PC-9 (cell line): ENCODE measurements at regions of chr9 and their contacts with region 1.

Region 1: GRCh38 chr9:78866207-78867132 is 569.5 kb downstream of the PSAT1 start:
- DNase-seq: peak; percentile 44 to 63
- H3K4me3 ChIP-seq: no peak overlapping the region
- H3K27ac ChIP-seq: no peak overlapping the region
- H3K4me1 ChIP-seq: no peaks in the 10 kb centered on the region
- H3K27me3 ChIP-seq: no peaks in the 10 kb centered on the region
- CTCF ChIP-seq: no peak

Region 2: GRCh38 chr9:78707481-78707991 is 158.9 kb before region 1 on chr9:
- CTCF ChIA-PET with region 1: no interaction called
- POLR2A ChIA-PET with region 1: no interaction called
- intact Hi-C with region 1: loop called (anchors 10 kb)
- DNase-seq: no peak
- H3K4me3 ChIP-seq: no peak overlapping the region
- H3K27ac ChIP-seq: no peak overlapping the region
- H3K4me1 ChIP-seq: 0 out of 2 replicates have a peak, but pooled peaks cover 5% of the 10 kb centered on the region
- H3K27me3 ChIP-seq: peaks cover 7% of the 10 kb centered on the region; the same call in 1 of the 2 replicates
- CTCF ChIP-seq: no peak

Region 3: GRCh38 chr9:78783743-78784142 is 82.7 kb before region 1 on chr9:
- CTCF ChIA-PET with region 1: no interaction called
- POLR2A ChIA-PET with region 1: no interaction called
- intact Hi-C with region 1: no loop called
- DNase-seq: no peak
- H3K4me3 ChIP-seq: no peak overlapping the region
- H3K27ac ChIP-seq: no peak overlapping the region
- H3K4me1 ChIP-seq: no peaks in the 10 kb centered on the region
- H3K27me3 ChIP-seq: no peaks in the 10 kb centered on the region
- CTCF ChIP-seq: no peak

Region 4: DNA sequence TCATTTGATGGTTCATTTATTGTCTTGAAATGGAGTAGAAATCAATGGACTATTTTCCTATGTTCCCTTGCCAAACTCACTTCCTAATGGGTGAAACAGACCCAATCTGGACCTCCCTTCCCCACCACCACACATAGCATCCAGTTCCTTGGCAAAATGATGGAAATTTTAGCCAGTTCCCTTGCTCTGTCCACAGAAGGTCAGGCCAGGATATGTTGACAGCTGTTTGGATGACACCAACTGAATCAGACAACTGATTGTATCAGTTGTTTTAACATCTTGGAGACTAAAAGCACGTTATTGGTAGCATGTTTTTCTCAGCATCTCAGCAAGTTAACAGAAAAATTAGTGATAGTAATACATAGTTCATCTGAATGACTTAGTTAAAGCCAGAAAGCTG is 34.7 kb before region 1 on chr9:
- CTCF ChIA-PET with region 1: no interaction called
- POLR2A ChIA-PET with region 1: no interaction called
- intact Hi-C with region 1: no loop called
- DNase-seq: no peak
- H3K4me3 ChIP-seq: no peak overlapping the region
- H3K27ac ChIP-seq: no peak overlapping the region
- H3K4me1 ChIP-seq: no peaks in the 10 kb centered on the region
- H3K27me3 ChIP-seq: no peaks in the 10 kb centered on the region
- CTCF ChIP-seq: no peak

Region 5: GRCh38 chr9:78932830-78933627 is 66.6 kb after region 1 on chr9:
- CTCF ChIA-PET with region 1: no interaction called
- POLR2A ChIA-PET with region 1: no interaction called
- intact Hi-C with region 1: loop called (anchors 5 kb)
- DNase-seq: peak in 1 of 2 experiments; percentile 7
- H3K4me3 ChIP-seq: no peak overlapping the region
- H3K27ac ChIP-seq: no peak overlapping the region
- H3K4me1 ChIP-seq: no peaks in the 10 kb centered on the region
- H3K27me3 ChIP-seq: no peaks in the 10 kb centered on the region
- CTCF ChIP-seq: no peak

Region 6: GRCh38 chr9:78973889-78974288 is 107.4 kb after region 1 on chr9:
- CTCF ChIA-PET with region 1: no interaction called
- POLR2A ChIA-PET with region 1: no interaction called
- intact Hi-C with region 1: loop called (anchors 5 kb)
- DNase-seq: peak; percentile 41 to 54
- H3K4me3 ChIP-seq: no peak overlapping the region
- H3K27ac ChIP-seq: no peak overlapping the region
- H3K4me1 ChIP-seq: no peaks in the 10 kb centered on the region
- H3K27me3 ChIP-seq: no peaks in the 10 kb centered on the region
- CTCF ChIP-seq: no peak

Region 7: DNA sequence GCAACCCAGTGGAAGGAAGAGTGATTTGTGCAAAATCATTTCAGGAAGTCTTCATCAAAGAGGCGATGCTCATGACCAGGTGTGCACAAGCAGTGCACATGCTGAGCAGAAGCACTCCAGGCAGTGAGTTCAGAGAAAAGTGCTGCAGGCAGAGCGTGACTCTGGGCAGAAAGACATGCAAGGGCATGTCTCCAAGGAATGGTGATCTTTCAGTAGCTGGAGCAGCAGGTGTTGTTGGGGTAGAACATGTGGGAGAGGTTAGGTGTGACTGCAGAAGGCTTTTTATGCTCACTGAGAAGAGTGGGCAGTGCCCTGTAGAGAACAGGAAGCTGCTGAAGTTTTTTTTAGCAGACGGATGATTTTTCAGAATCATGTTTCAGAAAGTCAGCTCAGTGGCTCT is 159.8 kb after region 1 on chr9:
- CTCF ChIA-PET with region 1: no interaction called
- POLR2A ChIA-PET with region 1: no interaction called
- intact Hi-C with region 1: loop called (anchors 2 kb)
- DNase-seq: peak in 1 of 2 experiments; percentile 11
- H3K4me3 ChIP-seq: no peak overlapping the region
- H3K27ac ChIP-seq: no peak overlapping the region
- H3K4me1 ChIP-seq: no peaks in the 10 kb centered on the region
- H3K27me3 ChIP-seq: no peaks in the 10 kb centered on the region
- CTCF ChIP-seq: no peak

Region 8: DNA sequence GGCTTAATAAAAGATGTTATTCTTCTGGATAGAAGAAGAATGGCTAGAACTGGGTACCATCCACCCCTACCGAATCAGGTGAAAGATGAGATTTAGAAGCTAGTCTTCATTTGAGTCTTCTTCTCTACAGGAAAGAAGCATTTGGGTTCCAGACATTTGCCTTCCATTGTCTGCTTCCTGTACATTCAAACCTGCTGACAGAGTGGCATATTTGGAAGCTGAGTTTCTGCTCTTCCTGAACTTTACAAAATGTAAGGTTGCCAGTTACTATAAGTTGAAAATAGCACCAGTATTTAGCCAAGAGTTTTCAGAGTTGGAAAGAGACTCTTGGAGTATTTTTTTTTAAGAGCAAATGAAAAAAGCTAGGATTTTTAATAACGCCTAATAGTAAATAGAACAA is 179.9 kb after region 1 on chr9:
- CTCF ChIA-PET with region 1: no interaction called
- POLR2A ChIA-PET with region 1: no interaction called
- intact Hi-C with region 1: no loop called
- DNase-seq: no peak
- H3K4me3 ChIP-seq: no peak overlapping the region
- H3K27ac ChIP-seq: no peak overlapping the region
- H3K4me1 ChIP-seq: no peaks in the 10 kb centered on the region
- H3K27me3 ChIP-seq: no peaks in the 10 kb centered on the region
- CTCF ChIP-seq: no peak

Region 9: GRCh38 chr9:79129865-79130480 is 263.5 kb after region 1 on chr9:
- CTCF ChIA-PET with region 1: no interaction called
- POLR2A ChIA-PET with region 1: no interaction called
- intact Hi-C with region 1: loop called (anchors 5 kb)
- DNase-seq: peak in 1 of 2 experiments; percentile 51
- H3K4me3 ChIP-seq: no peak overlapping the region
- H3K27ac ChIP-seq: no peak overlapping the region
- H3K4me1 ChIP-seq: no peaks in the 10 kb centered on the region
- H3K27me3 ChIP-seq: no peaks in the 10 kb centered on the region; the same call in none of the 2 replicates
- CTCF ChIP-seq: peak; percentile 76